ENCODE measurements at regions of chr5 and their contacts with region 1.

Region 1: GRCh38 chr5:140795259-140795641 is 598 bp downstream of the PCDHA2 start:
- DNase-seq: no peak
- H3K4me3 Mint-ChIP-seq: no peak overlapping the region
- H3K27ac Mint-ChIP-seq: no peak overlapping the region
- H3K4me1 Mint-ChIP-seq: no peaks in the 10 kb centered on the region
- H3K27me3 Mint-ChIP-seq: no peaks in the 10 kb centered on the region

Region 2: DNA sequence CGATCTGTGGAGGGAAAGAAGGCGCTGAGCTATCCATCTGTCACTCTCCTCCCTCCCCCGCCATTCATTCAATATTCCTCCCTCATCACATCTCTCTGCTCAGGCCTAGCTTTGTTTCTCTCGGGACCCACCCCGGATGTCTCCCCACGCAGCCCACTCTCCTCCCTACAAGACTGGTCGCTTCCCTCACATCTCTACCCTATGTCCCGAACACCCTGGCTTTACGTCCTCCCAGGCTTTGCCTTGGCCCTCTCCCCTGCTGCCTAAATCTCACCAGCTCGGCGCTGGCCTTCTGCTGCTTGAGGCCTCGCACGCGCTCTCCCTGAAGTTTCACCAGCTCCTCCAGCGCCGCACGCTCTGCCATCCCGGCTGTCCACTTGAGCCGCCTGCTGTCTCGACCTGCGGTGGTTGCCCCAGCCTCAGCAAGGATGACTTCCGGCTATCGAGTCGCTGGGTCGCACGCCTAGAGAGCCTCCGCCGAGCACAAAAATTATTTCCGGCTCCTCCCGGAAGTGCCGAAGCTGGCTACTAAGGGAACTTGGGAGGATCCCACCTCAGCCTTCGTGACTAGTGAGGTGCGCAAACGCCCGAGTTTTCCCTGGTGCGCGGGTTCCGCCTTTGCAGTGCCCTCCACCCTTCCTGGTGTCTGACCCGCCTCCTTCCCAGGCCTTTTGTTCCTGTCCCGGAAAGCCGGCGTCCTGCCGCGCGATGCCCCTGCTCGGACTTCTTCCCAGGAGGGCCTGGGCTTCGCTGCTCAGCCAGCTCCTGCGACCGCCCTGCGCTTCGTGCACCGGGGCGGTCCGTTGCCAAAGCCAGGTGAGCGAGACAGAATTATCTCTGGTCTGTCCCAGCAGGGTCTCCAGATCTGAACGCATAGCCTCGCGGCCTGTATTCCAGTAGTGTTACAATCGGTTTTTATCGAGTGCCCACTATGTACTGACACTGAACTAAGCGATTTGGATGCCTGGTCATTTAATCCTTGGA is 104.0 kb before region 1 on chr5 and contains the starts of genes HARS1 and HARS2:
- intact Hi-C with region 1: no loop called
- DNase-seq: peak; percentile 79
- H3K4me3 Mint-ChIP-seq: peak within 1 kb of the TSS; percentile 97
- H3K27ac Mint-ChIP-seq: peak within 1 kb of the TSS; percentile 91
- H3K4me1 Mint-ChIP-seq: peaks cover 20% of the 10 kb centered on the region
- H3K27me3 Mint-ChIP-seq: no peaks in the 10 kb centered on the region
- total RNA-seq, gene HARS1: 107 and 110 TPM in 2 replicates
- total RNA-seq, gene HARS2: 28.0 and 30.1 TPM in 2 replicates

Region 3: DNA sequence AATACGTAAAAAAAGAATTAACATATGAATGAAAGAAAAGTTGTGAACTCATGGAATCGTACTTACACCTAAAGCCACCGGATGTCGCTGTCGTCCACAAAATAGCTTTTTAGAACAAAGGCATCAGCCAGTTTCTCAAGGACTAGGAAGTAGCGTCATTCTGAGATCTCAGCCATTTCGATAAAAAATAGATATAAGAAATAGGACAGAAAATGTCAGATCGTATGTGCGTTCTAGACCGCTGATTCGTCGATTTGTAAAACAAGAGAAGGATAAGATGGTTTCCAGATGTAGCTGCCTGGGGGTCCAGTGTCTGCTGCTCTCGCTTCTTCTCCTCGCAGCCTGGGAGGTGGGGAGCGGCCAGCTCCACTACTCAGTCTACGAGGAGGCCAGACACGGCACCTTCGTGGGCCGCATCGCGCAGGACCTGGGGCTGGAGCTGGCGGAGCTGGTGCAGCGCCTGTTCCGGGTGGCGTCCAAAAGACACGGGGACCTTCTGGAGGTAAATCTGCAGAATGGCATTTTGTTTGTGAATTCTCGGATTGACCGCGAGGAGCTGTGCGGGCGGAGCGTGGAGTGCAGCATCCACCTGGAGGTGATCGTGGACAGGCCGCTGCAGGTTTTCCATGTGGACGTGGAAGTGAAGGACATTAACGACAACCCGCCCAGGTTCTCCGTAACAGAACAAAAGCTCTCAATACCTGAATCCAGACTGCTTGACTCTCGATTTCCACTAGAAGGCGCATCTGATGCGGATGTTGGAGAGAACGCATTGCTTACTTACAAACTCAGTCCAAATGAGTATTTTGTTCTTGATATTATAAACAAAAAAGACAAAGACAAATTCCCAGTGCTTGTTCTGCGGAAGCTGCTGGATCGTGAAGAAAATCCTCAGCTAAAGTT is 60.8 kb after region 1 on chr5 and contains the start of gene PCDHA10:
- intact Hi-C with region 1: loop called (anchors 10 kb)
- DNase-seq: no peak
- H3K4me3 Mint-ChIP-seq: no peak within 1 kb of the TSS
- H3K27ac Mint-ChIP-seq: no peak within 1 kb of the TSS
- H3K4me1 Mint-ChIP-seq: no peaks in the 10 kb centered on the region
- H3K27me3 Mint-ChIP-seq: no peaks in the 10 kb centered on the region
- total RNA-seq, gene PCDHA10: not detected in 2 replicates

Measured in activated T-helper 2 cell treated with anti-CD3 and anti-CD28 coated beads, Interferon-gamma antibody, Interleukin-2, Interleukin-4, amounts not matched to agents 10 μg/mL and 5 μg/mL and 100 μg/mL, durations not matched to agents 14 hours and 24 hours and 36 hours (primary cell).